ENCODE measurements at regions of chr13 and their contacts with region 1.

Region 1: GRCh38 chr13:49996951-49997895 is at the start of gene TRIM13:
- DNase-seq: peak; percentile 72 to 90 (median 81)
- ATAC-seq: peak; percentile 80
- H3K4me3 ChIP-seq: peak within 1 kb of the TSS; percentile 87 to 99
- H3K4me3 Mint-ChIP-seq: peak within 1 kb of the TSS; percentile 86
- H3K27ac ChIP-seq: peak within 1 kb of the TSS; percentile 84 to 85
- H3K27ac Mint-ChIP-seq: peak within 1 kb of the TSS; percentile 86
- H3K4me1 ChIP-seq: peaks cover 27% of the 10 kb centered on the region
- H3K4me1 Mint-ChIP-seq: peaks cover 49% of the 10 kb centered on the region
- H3K27me3 ChIP-seq: no peaks in the 10 kb centered on the region
- H3K27me3 Mint-ChIP-seq: no peaks in the 10 kb centered on the region
- CTCF ChIP-seq: peak; percentile 78
- total RNA-seq, gene TRIM13: 24.0 to 24.4 TPM

Region 2: GRCh38 chr13:49585220-49586157 is 411.7 kb before region 1 on chr13 and contains the start of gene RCBTB1:
- CTCF ChIA-PET with region 1: no interaction called
- POLR2A ChIA-PET with region 1: no interaction called
- intact Hi-C with region 1: loop called in 1 of 2 experiments (anchors 5 kb)
- DNase-seq: peak; percentile 33 to 88 (median 68)
- ATAC-seq: peak; percentile 88
- H3K4me3 ChIP-seq: peak within 1 kb of the TSS; percentile 89 to 97
- H3K4me3 Mint-ChIP-seq: peak within 1 kb of the TSS; percentile 90
- H3K27ac ChIP-seq: peak within 1 kb of the TSS; percentile 71 to 86
- H3K27ac Mint-ChIP-seq: peak within 1 kb of the TSS; percentile 92
- H3K4me1 ChIP-seq: peaks cover 9% of the 10 kb centered on the region
- H3K4me1 Mint-ChIP-seq: peaks cover 36% of the 10 kb centered on the region
- H3K27me3 ChIP-seq: no peaks in the 10 kb centered on the region
- H3K27me3 Mint-ChIP-seq: no peaks in the 10 kb centered on the region
- CTCF ChIP-seq: no peak
- total RNA-seq, gene RCBTB1: 12.1 to 14.2 TPM

Region 3: DNA sequence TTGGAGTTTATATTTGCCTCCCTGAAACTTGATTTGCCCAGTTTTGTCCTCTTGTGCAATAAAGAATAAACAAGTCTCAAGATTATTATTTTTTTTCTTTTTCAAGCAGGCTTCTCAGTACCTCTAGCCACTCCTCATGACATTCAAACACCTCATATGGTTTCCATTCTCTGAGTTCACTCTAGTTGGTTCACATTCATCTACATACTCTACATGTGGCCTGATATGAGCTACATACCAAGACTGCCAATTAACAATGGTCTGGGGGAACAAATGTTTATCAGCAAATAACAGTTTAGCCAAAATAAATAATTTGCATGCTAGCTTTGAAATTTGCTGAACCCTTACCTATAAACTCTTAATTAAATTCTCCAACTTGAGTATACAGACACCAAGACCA is 40.6 kb after region 1 on chr13:
- CTCF ChIA-PET with region 1: no interaction called
- POLR2A ChIA-PET with region 1: interaction called, 3 read pairs
- intact Hi-C with region 1: loop called in 1 of 2 experiments (anchors 5 kb)
- DNase-seq: no peak
- ATAC-seq: no peak
- H3K4me3 ChIP-seq: no peak overlapping the region
- H3K4me3 Mint-ChIP-seq: no peak overlapping the region
- H3K27ac ChIP-seq: no peak overlapping the region
- H3K27ac Mint-ChIP-seq: no peak overlapping the region
- H3K4me1 ChIP-seq: no peaks in the 10 kb centered on the region
- H3K4me1 Mint-ChIP-seq: no peaks in the 10 kb centered on the region
- H3K27me3 ChIP-seq: no peaks in the 10 kb centered on the region
- H3K27me3 Mint-ChIP-seq: no peaks in the 10 kb centered on the region
- CTCF ChIP-seq: no peak

Region 4: DNA sequence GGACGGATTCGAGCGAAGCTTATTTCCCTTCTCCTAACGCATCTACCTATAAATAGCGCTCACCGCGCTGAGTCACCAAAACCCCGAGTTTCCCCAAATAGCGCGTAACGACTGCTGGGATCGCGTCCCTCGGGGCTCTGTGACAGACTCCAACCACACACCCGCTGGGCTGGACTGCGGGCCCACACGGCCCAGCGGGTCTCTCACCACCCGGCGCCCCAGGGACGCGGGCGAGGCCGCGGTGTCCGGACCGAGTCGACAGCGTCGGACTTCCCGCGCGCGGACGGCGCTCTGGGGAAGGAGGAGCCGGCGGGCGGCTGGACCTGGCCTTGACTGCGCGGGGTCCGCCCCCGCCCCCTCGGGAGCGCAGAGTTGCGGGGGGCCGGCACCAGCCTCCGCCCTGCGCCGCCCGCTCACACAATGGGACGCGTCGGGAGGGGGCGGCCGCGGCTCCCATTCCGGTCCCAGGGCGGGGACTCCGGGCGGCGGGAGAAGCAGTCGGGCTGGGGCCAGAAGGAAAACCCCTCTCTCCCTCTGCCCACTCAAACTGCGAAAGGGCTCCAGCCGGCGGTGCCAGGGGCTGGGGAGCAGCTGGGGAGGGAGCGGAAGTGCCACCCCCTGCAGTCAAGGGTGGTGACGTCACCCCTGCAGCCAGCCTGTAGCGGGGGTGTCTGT is 126.8 kb after region 1 on chr13:
- CTCF ChIA-PET with region 1: interaction called, 16 read pairs
- POLR2A ChIA-PET with region 1: interaction called, 77 read pairs
- intact Hi-C with region 1: loop called (anchors 1 to 2 kb)
- DNase-seq: peak in 8 of 9 experiments; percentile 43 to 91 (median 72)
- ATAC-seq: peak; percentile 65
- H3K4me3 ChIP-seq: peak overlapping the region; percentile 87 to 93
- H3K4me3 Mint-ChIP-seq: peak overlapping the region; percentile 90
- H3K27ac ChIP-seq: peak overlapping the region; percentile 90 to 92
- H3K27ac Mint-ChIP-seq: peak overlapping the region; percentile 96
- H3K4me1 ChIP-seq: peaks cover 24% of the 10 kb centered on the region
- H3K4me1 Mint-ChIP-seq: peaks cover 44% of the 10 kb centered on the region
- H3K27me3 ChIP-seq: peaks cover 12 to 19% of the 10 kb centered on the region in 2 experiments
- H3K27me3 Mint-ChIP-seq: peaks cover 15% of the 10 kb centered on the region
- CTCF ChIP-seq: no peak

Region 5: GRCh38 chr13:50365408-50366391 is 368.5 kb after region 1 on chr13:
- CTCF ChIA-PET with region 1: no interaction called
- POLR2A ChIA-PET with region 1: no interaction called
- intact Hi-C with region 1: loop called in 1 of 2 experiments (anchors 5 kb)
- DNase-seq: peak in 5 of 9 experiments; percentile 22 to 72 (median 51)
- ATAC-seq: peak; percentile 80
- H3K4me3 ChIP-seq: peak overlapping the region in 1 of 2 experiments; percentile 23
- H3K4me3 Mint-ChIP-seq: peak overlapping the region; percentile 70
- H3K27ac ChIP-seq: peak overlapping the region; percentile 21 to 80
- H3K27ac Mint-ChIP-seq: peak overlapping the region; percentile 88
- H3K4me1 ChIP-seq: peaks cover 5% of the 10 kb centered on the region
- H3K4me1 Mint-ChIP-seq: peaks cover 37% of the 10 kb centered on the region
- H3K27me3 ChIP-seq: no peaks in the 10 kb centered on the region
- H3K27me3 Mint-ChIP-seq: no peaks in the 10 kb centered on the region
- CTCF ChIP-seq: no peak

Region 6: DNA sequence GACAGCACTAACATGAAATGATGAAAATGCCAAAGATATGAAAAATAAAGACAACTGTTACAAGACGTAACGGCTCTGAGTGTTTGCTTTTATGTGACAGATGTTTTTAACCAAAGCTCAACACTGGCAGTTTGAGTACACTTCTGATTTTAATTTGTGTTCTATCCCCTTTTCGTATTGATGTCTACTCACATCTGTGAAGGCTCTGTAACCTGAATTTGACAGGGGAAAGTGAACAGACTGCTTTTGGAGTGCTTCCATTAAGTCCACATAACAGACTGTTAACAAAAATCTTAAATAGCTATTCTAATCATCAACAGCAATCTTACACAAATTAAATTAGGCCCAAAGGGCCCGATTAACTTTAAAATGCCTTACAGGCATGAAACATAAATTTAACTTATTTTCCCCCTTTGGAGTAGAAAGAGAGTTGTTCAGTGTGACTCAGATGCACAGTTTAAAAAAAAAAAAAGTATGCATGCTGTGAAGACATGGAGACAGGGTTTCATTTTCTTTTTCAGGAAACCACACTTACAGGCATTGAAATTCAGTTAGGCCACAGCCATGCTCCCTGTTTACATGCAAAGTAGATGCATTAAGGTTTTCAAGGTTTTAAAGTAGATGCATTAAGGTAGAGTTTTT is 896.1 kb after region 1 on chr13:
- CTCF ChIA-PET with region 1: interaction called, 8 read pairs
- POLR2A ChIA-PET with region 1: interaction called, 14 read pairs
- intact Hi-C with region 1: loop called in 1 of 2 experiments (anchors 5 kb)
- DNase-seq: peak in 5 of 9 experiments; percentile 16 to 80 (median 53)
- ATAC-seq: peak; percentile 95
- H3K4me3 ChIP-seq: peak overlapping the region; percentile 26 to 30
- H3K4me3 Mint-ChIP-seq: peak overlapping the region; percentile 80
- H3K27ac ChIP-seq: peak overlapping the region; percentile 46 to 86
- H3K27ac Mint-ChIP-seq: peak overlapping the region; percentile 91
- H3K4me1 ChIP-seq: peaks cover 27% of the 10 kb centered on the region
- H3K4me1 Mint-ChIP-seq: peaks cover 42% of the 10 kb centered on the region
- H3K27me3 ChIP-seq: no peaks in the 10 kb centered on the region
- H3K27me3 Mint-ChIP-seq: no peaks in the 10 kb centered on the region
- CTCF ChIP-seq: no peak

Measured in CD8-positive, alpha-beta T cell (primary cell).